Thyroid gland (tissue), 4 donors: ENCODE measurements at regions of chr18 and their contacts with region 1.

Region 1: GRCh38 chr18:69484699-69485396 is 84.2 kb downstream of the DOK6 start:
- DNase-seq: no peak
- H3K4me3 ChIP-seq: no peak overlapping the region
- H3K27ac ChIP-seq: no peak overlapping the region
- H3K4me1 ChIP-seq: no peaks in the 10 kb centered on the region
- H3K27me3 ChIP-seq: no peaks in the 10 kb centered on the region
- CTCF ChIP-seq: no peak
- POLR2A ChIP-seq: no peak

Region 2: GRCh38 chr18:69265656-69266055 is 219.2 kb before region 1 on chr18:
- intact Hi-C with region 1: loop called (anchors 10 kb)
- DNase-seq: no peak
- H3K4me3 ChIP-seq: no peak overlapping the region
- H3K27ac ChIP-seq: no peak overlapping the region
- H3K4me1 ChIP-seq: no peaks in the 10 kb centered on the region
- H3K27me3 ChIP-seq: no peaks in the 10 kb centered on the region
- CTCF ChIP-seq: no peak
- POLR2A ChIP-seq: no peak